Prostate gland (tissue), 2 donors: ENCODE measurements at regions of chr14 and their contacts with region 1.

Region 1: GRCh38 chr14:70027785-70028428 is 148.7 kb downstream of the SMOC1 start:
- DNase-seq: peak; percentile 46
- H3K4me3 ChIP-seq: no peak overlapping the region
- H3K27ac ChIP-seq: no peak overlapping the region
- H3K4me1 ChIP-seq: no peaks in the 10 kb centered on the region
- H3K27me3 ChIP-seq: no peaks in the 10 kb centered on the region
- CTCF ChIP-seq: peak; percentile 87 to 93 (median 88)
- POLR2A ChIP-seq: no peak

Region 2: GRCh38 chr14:68780358-68781160 is 1247.3 kb before region 1 on chr14:
- intact Hi-C with region 1: no loop called
- DNase-seq: no peak
- H3K4me3 ChIP-seq: no peak overlapping the region
- H3K27ac ChIP-seq: peak overlapping the region; percentile 54 to 66
- H3K4me1 ChIP-seq: peaks cover 19% of the 10 kb centered on the region
- H3K27me3 ChIP-seq: no peaks in the 10 kb centered on the region
- CTCF ChIP-seq: no peak
- POLR2A ChIP-seq: no peak

Region 3: DNA sequence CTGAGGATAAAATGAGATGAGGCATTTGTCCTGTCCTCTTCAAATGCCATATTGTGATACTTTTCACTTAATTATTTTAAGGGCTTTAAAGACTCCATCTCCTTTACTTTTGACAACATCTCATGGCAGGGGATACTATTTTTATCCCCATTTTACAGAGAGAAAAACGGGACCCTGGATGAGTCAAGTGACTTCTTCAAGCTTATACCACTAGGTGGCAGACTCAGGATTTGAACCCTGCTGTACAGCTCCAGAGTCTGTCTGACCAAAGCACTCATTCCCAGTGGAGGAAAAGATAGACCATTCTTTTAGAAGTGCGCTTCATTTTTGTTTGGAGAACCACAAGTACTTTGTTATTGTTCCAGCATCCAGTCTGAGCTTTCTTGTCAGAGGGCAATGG is 150.4 kb before region 1 on chr14:
- intact Hi-C with region 1: loop called (anchors 2 kb)
- DNase-seq: no peak
- H3K4me3 ChIP-seq: no peak overlapping the region
- H3K27ac ChIP-seq: no peak overlapping the region
- H3K4me1 ChIP-seq: no peaks in the 10 kb centered on the region
- H3K27me3 ChIP-seq: peaks cover 9% of the 10 kb centered on the region
- CTCF ChIP-seq: peak; percentile 10 to 47 (median 36)
- POLR2A ChIP-seq: no peak